Activated naive CD4-positive, alpha-beta T cell treated with anti-CD3 and anti-CD28 coated beads for 36 hours (primary cell): ENCODE measurements at regions of chr16 and their contacts with region 1.

Region 1: GRCh38 chr16:68022704-68023522 is at the starts of genes DDX28 and DUS2:
- DNase-seq: peak; percentile 96
- H3K4me3 Mint-ChIP-seq: peak within 1 kb of the TSS; percentile 99
- H3K27ac Mint-ChIP-seq: peak within 1 kb of the TSS; percentile 94
- H3K4me1 Mint-ChIP-seq: peaks cover 38% of the 10 kb centered on the region
- H3K27me3 Mint-ChIP-seq: no peaks in the 10 kb centered on the region
- total RNA-seq, gene DDX28: 9.4 to 9.7 TPM
- total RNA-seq, gene DUS2: 22.9 to 25.2 TPM

Region 2: DNA sequence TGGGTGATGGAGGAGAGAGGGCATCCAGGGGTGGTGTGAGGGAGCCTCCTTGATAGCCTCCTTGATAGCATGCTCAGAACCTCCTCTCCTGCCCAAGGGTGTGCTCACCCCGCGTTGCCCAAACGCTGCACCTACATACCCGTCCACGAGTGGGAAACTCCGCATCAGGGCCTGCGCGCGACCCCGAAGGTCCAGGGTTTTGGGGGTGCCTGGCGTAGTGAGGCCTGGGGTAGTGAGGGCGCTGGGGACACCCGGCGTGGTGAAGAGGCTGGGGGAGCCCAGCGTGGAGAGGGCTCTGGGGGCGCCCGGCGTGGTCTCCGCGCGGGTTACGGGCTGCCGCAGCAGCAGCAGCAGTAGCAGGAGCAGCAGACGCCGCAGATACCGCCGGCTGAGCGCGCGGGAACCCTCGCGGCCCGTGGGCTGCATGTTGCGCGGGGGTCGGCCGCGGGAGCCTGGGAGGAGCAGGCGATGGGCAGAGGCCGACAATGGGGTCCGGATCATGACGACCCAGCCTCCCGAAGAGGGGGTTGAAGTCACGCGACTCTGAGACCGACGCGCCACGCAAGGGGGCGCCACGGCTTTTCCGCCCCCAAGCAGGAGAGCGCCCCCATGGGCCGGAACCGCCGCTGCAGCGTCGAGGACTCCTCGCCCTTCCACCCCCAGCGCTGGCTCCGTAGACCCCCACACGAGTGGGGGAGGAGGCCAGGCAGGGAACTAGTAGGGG is 42.8 kb before region 1 on chr16 and contains the start of gene DPEP3:
- CTCF ChIA-PET with region 1: no interaction called
- intact Hi-C with region 1: loop called (anchors 5 kb)
- DNase-seq: no peak
- H3K4me3 Mint-ChIP-seq: no peak within 1 kb of the TSS
- H3K27ac Mint-ChIP-seq: no peak within 1 kb of the TSS
- H3K4me1 Mint-ChIP-seq: peaks cover 24% of the 10 kb centered on the region
- H3K27me3 Mint-ChIP-seq: no peaks in the 10 kb centered on the region
- total RNA-seq, gene DPEP3: 0.19 TPM in 1 of 2 experiments, not detected in the other

Region 3: DNA sequence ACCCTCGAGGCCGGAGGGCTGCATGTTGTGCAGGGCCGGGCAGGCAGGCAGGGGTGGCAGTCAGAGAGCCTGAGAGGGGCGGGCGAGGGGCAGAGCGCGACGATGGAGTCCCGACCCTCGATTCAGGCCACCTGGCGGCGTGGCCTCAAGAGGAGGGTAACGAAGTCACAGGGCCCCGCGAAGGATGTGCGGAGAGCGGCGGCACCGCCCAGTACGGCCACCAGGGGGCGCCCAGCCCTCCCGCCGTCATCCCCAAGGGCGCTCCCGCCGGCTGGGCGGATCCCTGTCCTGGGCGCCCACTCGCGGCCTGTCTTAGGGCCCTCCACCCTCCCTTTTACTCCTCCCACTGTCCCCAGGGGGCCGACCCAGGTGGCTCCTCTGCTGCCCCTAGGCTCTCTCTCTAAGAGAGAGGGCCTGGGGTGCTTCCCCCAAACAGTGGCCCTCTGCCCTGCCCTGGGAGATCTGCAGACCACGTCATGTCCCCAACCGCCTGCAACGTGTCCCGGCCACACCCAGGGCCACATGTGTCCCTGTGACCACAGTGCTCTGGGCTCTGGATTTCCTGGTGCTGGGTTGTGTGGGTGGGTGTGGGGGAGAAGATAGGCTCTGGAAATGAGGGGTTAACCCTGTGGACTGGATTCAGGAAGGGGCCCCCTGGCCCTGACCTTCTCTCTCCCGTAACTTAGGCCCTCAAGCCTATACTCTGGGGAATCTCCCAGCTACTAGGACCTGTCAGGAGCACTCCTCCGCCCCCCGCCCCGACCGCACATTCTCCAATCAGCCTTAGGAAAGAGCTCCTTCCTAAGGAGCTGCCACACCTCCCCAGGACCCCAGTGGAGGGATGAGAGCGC is 29.5 kb before region 1 on chr16:
- CTCF ChIA-PET with region 1: interaction called, 5 read pairs
- intact Hi-C with region 1: loop called (anchors 1 kb)
- DNase-seq: peak; percentile 83
- H3K4me3 Mint-ChIP-seq: peak overlapping the region; percentile 80
- H3K27ac Mint-ChIP-seq: peak overlapping the region; percentile 92
- H3K4me1 Mint-ChIP-seq: peaks cover 37% of the 10 kb centered on the region
- H3K27me3 Mint-ChIP-seq: no peaks in the 10 kb centered on the region

Region 4: GRCh38 chr16:68064791-68065365 is 42.0 kb after region 1 on chr16:
- CTCF ChIA-PET with region 1: interaction called, 15 read pairs
- intact Hi-C with region 1: loop called (anchors 2 kb)
- DNase-seq: peak; percentile 88
- H3K4me3 Mint-ChIP-seq: no peak overlapping the region
- H3K27ac Mint-ChIP-seq: no peak overlapping the region
- H3K4me1 Mint-ChIP-seq: peaks cover 61% of the 10 kb centered on the region
- H3K27me3 Mint-ChIP-seq: no peaks in the 10 kb centered on the region